AG04449 (cell line): ENCODE measurements at regions of chr4 and their contacts with region 1.

Region 1: GRCh38 chr4:22356987-22357596 is 158.8 kb downstream of the ADGRA3 start:
- DNase-seq: no peak
- H3K4me3 ChIP-seq: no peak overlapping the region
- CTCF ChIP-seq: peak; percentile 36

Region 2: GRCh38 chr4:22129454-22130029 is 227.6 kb before region 1 on chr4:
- CTCF ChIA-PET with region 1: interaction called, 11 read pairs
- POLR2A ChIA-PET with region 1: no interaction called
- DNase-seq: no peak
- H3K4me3 ChIP-seq: no peak overlapping the region
- CTCF ChIP-seq: peak; percentile 64

Region 3: GRCh38 chr4:22268350-22269025 is 88.6 kb before region 1 on chr4:
- CTCF ChIA-PET with region 1: no interaction called
- POLR2A ChIA-PET with region 1: no interaction called
- DNase-seq: no peak
- H3K4me3 ChIP-seq: no peak overlapping the region
- CTCF ChIP-seq: no peak

Region 4: DNA sequence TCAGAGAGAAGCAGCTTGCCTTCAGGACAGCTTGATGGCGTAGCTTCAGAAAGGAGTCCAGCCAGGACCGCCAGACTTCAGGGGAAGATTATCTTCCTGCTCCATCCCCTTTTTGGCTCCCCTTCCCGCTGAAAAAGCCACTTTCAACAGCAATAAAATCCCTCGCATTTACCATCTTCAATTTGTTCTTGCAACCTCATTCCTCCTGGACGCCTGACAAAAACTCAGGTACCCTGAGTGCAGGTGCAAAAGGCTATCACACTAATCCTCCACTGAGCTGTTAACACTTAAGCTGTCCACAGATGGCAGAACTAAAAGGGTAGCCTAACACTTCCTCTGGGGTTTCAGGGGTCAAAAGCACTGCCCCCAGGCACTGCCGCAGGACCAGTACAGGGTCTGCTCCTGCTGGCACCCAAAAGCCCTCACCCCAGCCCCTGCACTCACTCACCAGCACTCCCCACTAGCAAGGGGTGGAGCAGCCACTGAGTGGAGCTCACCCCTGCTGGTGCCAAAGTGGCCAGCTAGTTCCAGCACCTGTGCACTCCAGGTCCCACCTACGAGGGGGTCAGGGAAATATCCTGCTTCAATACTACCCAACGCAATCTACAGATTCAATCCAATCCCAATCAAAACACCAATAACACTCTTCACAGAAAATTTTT is 12.9 kb after region 1 on chr4:
- CTCF ChIA-PET with region 1: interaction called, 10 read pairs
- POLR2A ChIA-PET with region 1: no interaction called
- DNase-seq: no peak
- H3K4me3 ChIP-seq: no peak overlapping the region
- CTCF ChIP-seq: no peak